ENCODE measurements at regions of chr6 and their contacts with region 1.

Region 1: DNA sequence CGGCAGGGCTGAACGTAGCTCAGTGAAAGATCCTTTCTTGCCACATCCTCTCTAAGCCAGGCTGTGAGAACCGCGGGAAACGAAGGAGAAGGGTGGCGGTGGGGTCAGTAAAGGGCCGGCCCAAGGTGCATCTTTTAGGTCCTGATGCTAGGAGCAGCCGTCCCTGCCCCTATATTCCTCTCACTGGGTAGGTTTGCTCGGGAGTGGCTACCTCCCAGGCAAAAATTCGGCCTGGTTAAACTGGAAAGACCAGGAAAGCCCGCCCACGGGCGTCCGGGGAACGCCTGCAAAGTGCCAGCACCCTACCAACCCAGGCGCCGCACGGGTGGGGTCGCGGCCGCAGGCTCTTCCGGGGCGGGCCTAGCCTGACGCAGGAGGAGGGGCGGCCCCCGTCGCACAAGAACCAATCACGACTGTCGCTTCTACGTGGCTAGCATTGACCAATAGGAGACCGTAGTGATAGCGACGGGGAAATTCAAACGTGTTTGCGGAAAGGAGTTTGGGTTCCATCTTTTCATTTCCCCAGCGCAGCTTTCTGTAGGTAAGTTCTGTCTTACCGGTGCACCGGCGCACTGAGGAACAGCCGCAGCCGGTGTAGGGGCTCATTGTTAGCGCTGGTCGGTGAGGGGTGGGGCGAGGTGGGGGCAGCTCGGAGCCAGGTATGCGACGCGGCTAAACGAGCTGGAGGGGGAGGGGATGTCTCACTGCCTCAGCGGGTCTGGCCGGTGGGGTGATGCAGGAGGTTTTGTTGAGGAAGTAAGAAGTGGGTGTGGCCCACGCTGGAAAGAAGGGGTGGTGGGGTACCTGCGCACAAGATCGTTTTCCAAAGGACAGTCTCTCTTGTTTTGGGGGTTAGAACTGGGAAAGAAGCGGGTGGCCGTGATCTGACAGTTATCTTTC is at the start of gene TTK:
- DNase-seq: peak; percentile 91
- ATAC-seq: peak; percentile 95
- H3K4me3 ChIP-seq: peak within 1 kb of the TSS; percentile 90
- H3K27ac ChIP-seq: peak within 1 kb of the TSS; percentile 51
- H3K4me1 ChIP-seq: peaks cover 19% of the 10 kb centered on the region
- H3K27me3 ChIP-seq: no peaks in the 10 kb centered on the region
- CTCF ChIP-seq: no peak
- total RNA-seq, gene TTK: 38.9 and 39.0 TPM in 2 replicates

Region 2: GRCh38 chr6:78961513-78961912 is 1042.9 kb before region 1 on chr6:
- CTCF ChIA-PET with region 1: no interaction called
- POLR2A ChIA-PET with region 1: no interaction called
- intact Hi-C with region 1: no loop called
- DNase-seq: peak; percentile 3
- ATAC-seq: no peak
- H3K4me3 ChIP-seq: no peak overlapping the region
- H3K27ac ChIP-seq: no peak overlapping the region
- H3K4me1 ChIP-seq: no peaks in the 10 kb centered on the region
- H3K27me3 ChIP-seq: no peaks in the 10 kb centered on the region
- CTCF ChIP-seq: no peak

Region 3: DNA sequence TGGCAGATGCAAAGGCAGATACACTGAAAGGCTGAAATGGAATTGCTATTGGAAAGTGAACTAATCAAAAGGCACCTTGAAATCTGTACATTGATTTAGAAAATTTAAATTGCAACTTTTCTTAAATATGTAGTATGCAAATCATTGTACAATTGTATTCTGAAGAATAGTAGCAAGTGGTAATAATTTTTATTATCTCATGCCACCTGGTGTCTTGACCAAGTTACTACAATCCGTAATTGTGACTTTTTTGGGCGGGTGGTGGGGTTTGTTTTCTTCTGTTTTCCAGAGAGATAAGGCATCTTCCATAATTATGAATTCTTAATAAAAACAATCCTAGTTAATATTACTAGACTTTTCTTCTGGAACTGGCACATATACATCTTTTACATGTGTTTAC is 89.6 kb after region 1 on chr6:
- CTCF ChIA-PET with region 1: no interaction called
- POLR2A ChIA-PET with region 1: no interaction called
- intact Hi-C with region 1: loop called (anchors 10 kb)
- DNase-seq: peak; percentile 49
- ATAC-seq: no peak; the same call in 1 of the 2 replicates
- H3K4me3 ChIP-seq: no peak overlapping the region
- H3K27ac ChIP-seq: no peak overlapping the region
- H3K4me1 ChIP-seq: no peaks in the 10 kb centered on the region
- H3K27me3 ChIP-seq: no peaks in the 10 kb centered on the region
- CTCF ChIP-seq: peak; percentile 62